ENCODE measurements at regions of chr19 and their contacts with region 1.

Region 1: GRCh38 chr19:51393959-51394836 is 3.8 kb upstream of the C19orf84 start:
- DNase-seq: peak; percentile 76
- ATAC-seq: peak; percentile 87
- H3K4me3 Mint-ChIP-seq: peak overlapping the region; percentile 83
- H3K27ac Mint-ChIP-seq: peak overlapping the region; percentile 90
- H3K4me1 Mint-ChIP-seq: peaks cover 37% of the 10 kb centered on the region
- H3K27me3 Mint-ChIP-seq: no peaks in the 10 kb centered on the region
- CTCF ChIP-seq: no peak

Region 2: DNA sequence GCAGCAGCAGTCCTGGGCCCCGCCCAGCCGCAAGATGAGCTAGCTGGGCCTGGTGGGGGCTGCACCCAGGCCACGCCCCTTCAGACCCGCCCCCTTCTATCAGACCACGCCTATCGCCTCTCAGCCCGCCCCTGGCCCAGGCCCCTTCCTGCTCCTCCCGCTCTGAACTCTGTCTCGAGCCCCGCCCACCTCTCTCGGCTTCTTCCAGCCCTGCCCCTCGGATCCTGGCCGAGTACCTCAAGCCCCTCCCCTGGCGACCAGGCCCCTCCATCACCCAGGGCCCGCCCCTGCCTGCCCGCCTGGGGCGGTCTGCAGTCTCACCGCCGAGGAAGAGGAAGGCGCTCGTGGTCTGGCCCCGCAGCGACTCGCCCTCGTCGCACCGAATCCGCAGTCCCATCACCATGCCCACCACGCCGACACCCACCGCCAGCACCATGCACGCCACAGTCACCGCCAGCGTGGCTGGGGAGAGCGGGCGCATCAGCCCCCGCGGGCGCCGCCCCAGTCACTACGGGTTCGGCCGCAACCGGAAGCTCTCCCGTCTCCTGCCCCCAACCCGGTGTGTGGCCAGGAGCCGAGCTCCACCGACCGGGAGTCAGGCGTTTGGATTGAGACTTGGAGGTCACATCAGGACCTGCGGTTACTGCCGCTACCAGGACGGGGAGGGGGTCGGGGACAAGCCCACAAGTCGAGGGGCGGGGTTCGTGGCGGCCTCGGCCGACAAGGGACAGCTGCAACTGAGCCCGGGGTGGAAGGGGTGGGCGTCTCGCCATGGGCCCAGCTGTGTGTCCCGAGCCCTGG is 26.4 kb before region 1 on chr19:
- CTCF ChIA-PET with region 1: interaction called, 3 read pairs
- POLR2A ChIA-PET with region 1: interaction called, 22 read pairs
- intact Hi-C with region 1: loop called (anchors 1 kb)
- DNase-seq: peak; percentile 99
- ATAC-seq: peak; percentile 84
- H3K4me3 Mint-ChIP-seq: peak overlapping the region; percentile 98
- H3K27ac Mint-ChIP-seq: peak overlapping the region; percentile 96
- H3K4me1 Mint-ChIP-seq: peaks cover 36% of the 10 kb centered on the region
- H3K27me3 Mint-ChIP-seq: no peaks in the 10 kb centered on the region
- CTCF ChIP-seq: no peak

Region 3: GRCh38 chr19:51380379-51380778 is 13.8 kb before region 1 on chr19:
- CTCF ChIA-PET with region 1: no interaction called
- POLR2A ChIA-PET with region 1: no interaction called
- intact Hi-C with region 1: no loop called
- DNase-seq: no peak
- ATAC-seq: no peak
- H3K4me3 Mint-ChIP-seq: no peak overlapping the region
- H3K27ac Mint-ChIP-seq: no peak overlapping the region
- H3K4me1 Mint-ChIP-seq: no peaks in the 10 kb centered on the region
- H3K27me3 Mint-ChIP-seq: peaks cover 3% of the 10 kb centered on the region
- CTCF ChIP-seq: no peak

Region 4: GRCh38 chr19:51407511-51408131 is 13.4 kb after region 1 on chr19:
- CTCF ChIA-PET with region 1: interaction called, 12 read pairs
- POLR2A ChIA-PET with region 1: interaction called, 4 read pairs
- intact Hi-C with region 1: no loop called
- DNase-seq: no peak
- ATAC-seq: peak; percentile 79
- H3K4me3 Mint-ChIP-seq: no peak overlapping the region
- H3K27ac Mint-ChIP-seq: peak overlapping the region; percentile 53
- H3K4me1 Mint-ChIP-seq: peaks cover 28% of the 10 kb centered on the region
- H3K27me3 Mint-ChIP-seq: no peaks in the 10 kb centered on the region
- CTCF ChIP-seq: no peak

Region 5: GRCh38 chr19:51441410-51442390 is 47.5 kb after region 1 on chr19:
- CTCF ChIA-PET with region 1: interaction called, 10 read pairs
- POLR2A ChIA-PET with region 1: interaction called, 8 read pairs
- intact Hi-C with region 1: loop called (anchors 1 kb)
- DNase-seq: peak; percentile 48
- ATAC-seq: peak; percentile 89
- H3K4me3 Mint-ChIP-seq: peak overlapping the region; percentile 71
- H3K27ac Mint-ChIP-seq: peak overlapping the region; percentile 77
- H3K4me1 Mint-ChIP-seq: peaks cover 30% of the 10 kb centered on the region
- H3K27me3 Mint-ChIP-seq: peaks cover 16% of the 10 kb centered on the region
- CTCF ChIP-seq: no peak

Region 6: GRCh38 chr19:51473009-51473707 is 79.0 kb after region 1 on chr19:
- CTCF ChIA-PET with region 1: interaction called, 9 read pairs
- POLR2A ChIA-PET with region 1: no interaction called
- intact Hi-C with region 1: loop called (anchors 2 kb)
- DNase-seq: peak; percentile 56
- ATAC-seq: peak; percentile 67
- H3K4me3 Mint-ChIP-seq: no peak overlapping the region
- H3K27ac Mint-ChIP-seq: no peak overlapping the region
- H3K4me1 Mint-ChIP-seq: peaks cover 10% of the 10 kb centered on the region
- H3K27me3 Mint-ChIP-seq: peaks cover 5% of the 10 kb centered on the region
- CTCF ChIP-seq: peak; percentile 40

Region 7: GRCh38 chr19:51514866-51515481 is 120.8 kb after region 1 on chr19:
- CTCF ChIA-PET with region 1: no interaction called
- POLR2A ChIA-PET with region 1: no interaction called
- intact Hi-C with region 1: loop called (anchors 1 kb)
- DNase-seq: no peak
- ATAC-seq: no peak
- H3K4me3 Mint-ChIP-seq: no peak overlapping the region
- H3K27ac Mint-ChIP-seq: no peak overlapping the region
- H3K4me1 Mint-ChIP-seq: peaks cover 7% of the 10 kb centered on the region
- H3K27me3 Mint-ChIP-seq: peaks cover 2% of the 10 kb centered on the region
- CTCF ChIP-seq: peak; percentile 72

Region 8: GRCh38 chr19:51703575-51704515 is 309.6 kb after region 1 on chr19:
- CTCF ChIA-PET with region 1: no interaction called
- POLR2A ChIA-PET with region 1: no interaction called
- intact Hi-C with region 1: loop called (anchors 1 kb)
- DNase-seq: peak; percentile 98
- ATAC-seq: peak; percentile 92
- H3K4me3 Mint-ChIP-seq: peak overlapping the region; percentile 88
- H3K27ac Mint-ChIP-seq: peak overlapping the region; percentile 85
- H3K4me1 Mint-ChIP-seq: peaks cover 33% of the 10 kb centered on the region
- H3K27me3 Mint-ChIP-seq: peaks cover 16% of the 10 kb centered on the region
- CTCF ChIP-seq: no peak

Measured in activated B cell treated with CpG ODN at 0.5 μM for 24 hours (primary cell).